Transverse colon (tissue), 4 donors: ENCODE measurements at regions of chr11 and their contacts with region 1.

Region 1: GRCh38 chr11:18526521-18527296 is at the start of gene TSG101:
- DNase-seq: peak; percentile 92
- H3K4me3 ChIP-seq: peak within 1 kb of the TSS; percentile 66 to 91 (median 77)
- H3K27ac ChIP-seq: peak within 1 kb of the TSS; percentile 91 to 98 (median 94)
- H3K4me1 ChIP-seq: peaks cover 8 to 43% (median 15%) of the 10 kb centered on the region in 4 donors
- H3K27me3 ChIP-seq: no peaks in the 10 kb centered on the region
- CTCF ChIP-seq: peak in 1 of 5 experiments; percentile 7
- EP300 ChIP-seq: no peak
- POLR2A ChIP-seq: peak; percentile 86
- total RNA-seq, gene TSG101: 32.2 to 95.8 (median 81.2) TPM

Region 2: DNA sequence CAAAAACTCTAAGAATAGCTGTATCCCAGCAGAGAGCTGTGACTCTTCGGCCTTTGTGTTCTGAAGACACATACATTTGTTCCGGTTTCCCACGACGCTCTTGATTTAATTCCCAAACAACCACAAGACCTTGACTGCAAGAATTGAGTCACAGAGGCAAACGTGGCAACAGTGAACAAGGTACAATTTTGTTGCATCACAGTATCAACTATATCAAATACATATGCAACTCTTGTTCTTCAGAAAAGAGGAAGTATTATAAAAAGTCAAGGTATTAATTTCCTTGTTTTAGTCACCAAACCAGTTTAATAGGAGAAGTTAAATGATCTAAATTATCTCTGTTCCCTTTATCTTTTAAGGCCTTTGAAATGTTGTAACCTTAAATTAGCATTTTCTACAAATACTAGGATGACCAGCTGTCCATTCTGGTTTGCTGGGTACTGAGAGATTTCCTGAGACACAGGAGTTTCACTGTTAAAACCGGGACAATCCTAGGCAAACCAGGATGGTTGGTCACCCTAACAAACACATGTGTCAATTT is 215.8 kb before region 1 on chr11:
- in situ Hi-C with region 1: no loop called
- intact Hi-C with region 1: loop called (anchors 10 kb)
- DNase-seq: no peak
- H3K4me3 ChIP-seq: no peak overlapping the region
- H3K27ac ChIP-seq: no peak overlapping the region
- H3K4me1 ChIP-seq: peaks cover 0 to 4% (median 0%) of the 10 kb centered on the region in 4 donors
- H3K27me3 ChIP-seq: no peaks in the 10 kb centered on the region
- CTCF ChIP-seq: no peak
- EP300 ChIP-seq: no peak
- POLR2A ChIP-seq: no peak

Region 3: GRCh38 chr11:18321980-18322711 is 204.6 kb before region 1 on chr11 and contains the starts of genes GTF2H1 and HPS5:
- in situ Hi-C with region 1: loop called in 3 of 4 experiments (anchors 10 to 25 kb)
- intact Hi-C with region 1: loop called (anchors 10 kb)
- DNase-seq: peak; percentile 98
- H3K4me3 ChIP-seq: peak within 1 kb of the TSS; percentile 71 to 98 (median 84)
- H3K27ac ChIP-seq: peak within 1 kb of the TSS; percentile 91 to 97 (median 94)
- H3K4me1 ChIP-seq: peaks cover 19 to 51% (median 27%) of the 10 kb centered on the region in 4 donors
- H3K27me3 ChIP-seq: no peaks in the 10 kb centered on the region
- CTCF ChIP-seq: peak in 1 of 5 experiments; percentile 2
- EP300 ChIP-seq: peak; percentile 90
- POLR2A ChIP-seq: peak; percentile 97
- total RNA-seq, gene GTF2H1: 46.6 to 147 (median 60.0) TPM
- total RNA-seq, gene HPS5: 3.0 to 18.9 (median 14.2) TPM

Region 4: DNA sequence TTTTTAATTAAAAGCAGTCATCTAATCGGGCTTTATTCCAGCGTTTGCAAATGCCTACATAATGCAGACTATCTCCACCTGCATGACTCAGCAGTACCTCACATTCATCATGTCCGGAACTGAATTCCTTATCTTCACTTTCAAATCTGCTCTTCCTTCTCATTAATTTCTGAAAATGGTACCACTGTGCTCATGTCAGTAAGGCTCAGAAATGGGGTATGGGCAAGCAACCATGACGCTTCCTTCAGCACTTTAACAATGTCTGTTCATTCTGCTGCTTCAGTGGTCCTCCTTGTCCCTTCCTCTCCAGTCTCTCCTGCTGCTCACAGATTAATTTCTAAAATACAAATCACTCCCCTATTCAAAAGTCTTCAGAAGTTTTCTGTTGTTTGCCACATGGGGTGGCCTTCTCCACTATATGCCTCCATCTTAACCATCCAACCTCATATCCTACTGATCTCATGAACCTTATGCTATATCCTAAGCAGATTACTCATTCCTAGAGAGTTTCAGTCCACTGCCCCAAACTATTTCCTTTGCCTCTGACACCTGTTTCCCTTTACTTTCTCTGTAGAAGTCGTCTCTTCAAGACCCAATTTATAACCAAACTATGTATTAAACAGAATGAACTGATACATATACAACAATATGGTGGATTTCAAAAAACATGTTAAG is 197.4 kb before region 1 on chr11:
- in situ Hi-C with region 1: loop called in 3 of 4 experiments (anchors 10 to 25 kb)
- intact Hi-C with region 1: no loop called
- DNase-seq: no peak
- H3K4me3 ChIP-seq: no peak overlapping the region
- H3K27ac ChIP-seq: no peak overlapping the region
- H3K4me1 ChIP-seq: peaks cover 6 to 14% (median 8%) of the 10 kb centered on the region in 4 donors
- H3K27me3 ChIP-seq: no peaks in the 10 kb centered on the region
- CTCF ChIP-seq: no peak
- EP300 ChIP-seq: no peak
- POLR2A ChIP-seq: no peak

Region 5: DNA sequence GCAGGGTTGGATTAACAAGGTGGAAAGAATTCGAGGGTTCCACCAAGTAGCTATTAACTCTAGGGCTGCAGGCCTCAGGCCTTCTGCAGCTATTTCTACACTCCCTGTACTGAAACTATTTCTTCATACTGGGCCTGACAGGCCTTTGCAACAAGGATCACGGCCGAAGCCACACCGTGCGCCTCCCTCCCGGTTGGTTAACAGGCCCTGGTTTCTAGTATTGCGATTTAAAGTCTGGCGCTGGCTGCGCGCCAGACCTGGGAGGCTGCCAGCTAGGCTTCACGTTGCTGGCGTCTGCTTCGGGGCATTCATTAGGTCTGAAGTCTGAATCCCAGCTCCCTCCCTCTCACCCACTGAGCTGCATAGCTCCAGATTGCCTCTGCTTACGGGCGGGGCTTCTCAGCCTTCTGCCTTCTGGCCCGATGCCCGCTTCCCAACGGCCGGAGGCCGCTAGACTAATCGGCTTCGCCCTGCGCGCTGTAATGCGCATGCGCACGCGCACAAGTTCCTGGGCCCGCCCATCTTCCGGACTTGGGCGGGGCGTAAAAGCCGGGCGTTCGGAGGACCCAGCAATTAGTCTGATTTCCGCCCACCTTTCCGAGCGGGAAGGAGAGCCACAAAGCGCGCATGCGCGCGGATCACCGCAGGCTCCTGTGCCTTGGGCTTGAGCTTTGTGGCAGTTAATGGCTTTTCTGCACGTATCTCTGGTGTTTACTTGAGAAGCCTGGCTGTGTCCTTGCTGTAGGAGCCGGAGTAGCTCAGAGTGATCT is 130.8 kb before region 1 on chr11:
- in situ Hi-C with region 1: loop called in 2 of 4 experiments (anchors 10 kb)
- intact Hi-C with region 1: no loop called
- DNase-seq: peak; percentile 98
- H3K4me3 ChIP-seq: peak overlapping the region; percentile 85 to 97 (median 92)
- H3K27ac ChIP-seq: peak overlapping the region; percentile 96 to 99 (median 98)
- H3K4me1 ChIP-seq: peaks cover 0 to 28% (median 20%) of the 10 kb centered on the region in 4 donors
- H3K27me3 ChIP-seq: no peaks in the 10 kb centered on the region
- CTCF ChIP-seq: no peak
- EP300 ChIP-seq: peak; percentile 36
- POLR2A ChIP-seq: peak; percentile 89

Region 6: DNA sequence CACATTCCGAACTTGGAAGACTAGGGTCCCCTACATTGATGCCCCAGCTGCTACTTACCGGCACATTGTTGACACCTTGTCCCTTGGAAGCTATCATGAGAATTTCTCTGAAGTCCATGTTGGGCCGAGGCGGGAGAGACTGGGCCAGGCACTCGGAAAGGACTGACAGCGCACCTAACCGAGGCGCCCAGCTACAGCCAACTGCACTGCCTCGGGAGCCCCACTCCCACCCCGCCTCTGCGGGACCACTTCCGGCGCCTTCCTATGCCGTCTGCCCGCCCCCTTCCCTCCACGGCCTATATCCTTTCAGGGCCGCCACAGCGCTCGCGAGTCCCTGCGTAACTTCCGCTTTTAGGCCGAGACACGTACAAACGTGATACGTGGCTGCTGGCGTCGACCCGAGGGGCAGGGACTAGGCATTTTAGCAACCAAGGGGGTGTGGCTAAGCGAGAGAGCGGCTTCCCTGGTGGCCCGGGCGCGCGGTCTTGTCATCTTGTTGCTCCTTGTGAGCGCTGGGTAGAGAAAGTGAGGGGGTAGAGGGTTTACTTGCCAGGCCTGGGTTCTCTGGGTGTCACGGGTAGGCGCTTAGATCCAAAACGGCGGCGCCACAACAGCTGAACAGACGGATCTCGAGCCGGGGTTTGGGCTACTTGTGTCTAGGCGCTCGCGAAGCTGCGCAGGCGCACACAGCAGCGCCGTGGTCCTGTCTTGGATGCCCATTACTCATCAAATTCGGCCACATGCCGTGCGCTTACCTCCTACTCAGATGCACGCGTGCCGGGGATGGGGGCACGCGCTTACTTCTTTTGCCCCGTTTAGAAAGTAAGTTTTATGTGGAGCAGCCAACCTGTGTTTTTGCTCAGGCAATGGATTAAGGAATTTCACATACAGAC is 107.7 kb after region 1 on chr11 and contains the start of gene SPTY2D1:
- in situ Hi-C with region 1: loop called in 1 of 4 experiments (anchors 25 kb)
- intact Hi-C with region 1: no loop called
- DNase-seq: peak; percentile 99
- H3K4me3 ChIP-seq: peak within 1 kb of the TSS; percentile 78 to 99 (median 83)
- H3K27ac ChIP-seq: peak within 1 kb of the TSS; percentile 87 to 93 (median 92)
- H3K4me1 ChIP-seq: peaks cover 7 to 30% (median 15%) of the 10 kb centered on the region in 4 donors
- H3K27me3 ChIP-seq: no peaks in the 10 kb centered on the region
- CTCF ChIP-seq: no peak
- EP300 ChIP-seq: no peak
- POLR2A ChIP-seq: peak; percentile 96
- total RNA-seq, gene SPTY2D1: 8.2 to 18.4 (median 16.4) TPM

Region 7: GRCh38 chr11:18731949-18732821 is 205.5 kb after region 1 on chr11:
- in situ Hi-C with region 1: loop called in 1 of 4 experiments (anchors 25 kb)
- intact Hi-C with region 1: no loop called
- DNase-seq: peak; percentile 59
- H3K4me3 ChIP-seq: no peak overlapping the region
- H3K27ac ChIP-seq: no peak overlapping the region
- H3K4me1 ChIP-seq: no peaks in the 10 kb centered on the region
- H3K27me3 ChIP-seq: no peaks in the 10 kb centered on the region
- CTCF ChIP-seq: peak; percentile 78 to 96 (median 95)
- EP300 ChIP-seq: no peak
- POLR2A ChIP-seq: no peak